WTC11 (cell line): ENCODE measurements at regions of chr1 and their contacts with region 1.

Region 1: GRCh38 chr1:248811514-248812490 is 13.9 kb downstream of the SH3BP5L start:
- DNase-seq: peak; percentile 36
- ATAC-seq: peak; percentile 90
- H3K4me3 Mint-ChIP-seq: no peak overlapping the region
- H3K27ac Mint-ChIP-seq: no peak overlapping the region
- H3K4me1 Mint-ChIP-seq: peaks cover 14% of the 10 kb centered on the region
- H3K27me3 Mint-ChIP-seq: no peaks in the 10 kb centered on the region
- CTCF ChIP-seq: no peak

Region 2: DNA sequence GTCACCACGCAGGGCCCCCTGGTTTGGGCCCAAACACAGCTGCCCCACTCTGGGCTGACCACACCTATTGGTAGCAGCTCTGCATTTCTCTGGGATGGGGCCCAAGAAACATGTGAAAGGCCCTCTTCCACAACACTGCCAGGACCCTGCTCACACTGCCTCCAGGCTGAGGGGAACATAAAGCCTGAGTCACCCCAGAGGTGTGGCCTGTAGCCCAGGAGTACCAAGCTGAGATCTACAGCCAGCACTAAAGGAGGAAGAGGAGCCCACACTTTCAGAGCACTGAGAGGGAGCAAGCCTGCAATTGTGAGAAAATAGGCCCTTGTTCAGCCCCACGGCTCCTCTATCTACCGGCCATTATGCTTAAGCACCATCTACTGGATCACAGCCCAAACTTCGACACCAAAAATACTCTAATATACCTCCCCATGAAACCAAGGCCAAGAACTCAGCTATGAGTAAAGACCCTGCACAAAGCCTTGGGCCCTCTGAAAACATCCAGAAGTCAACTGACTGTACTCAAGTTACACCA is 199.9 kb before region 1 on chr1:
- CTCF ChIA-PET with region 1: no interaction called
- POLR2A ChIA-PET with region 1: no interaction called
- DNase-seq: no peak
- ATAC-seq: no peak
- H3K4me3 Mint-ChIP-seq: no peak overlapping the region
- H3K27ac Mint-ChIP-seq: no peak overlapping the region
- H3K4me1 Mint-ChIP-seq: no peaks in the 10 kb centered on the region
- H3K27me3 Mint-ChIP-seq: peaks cover 4% of the 10 kb centered on the region; the same call in 1 of the 2 replicates
- CTCF ChIP-seq: no peak

Region 3: DNA sequence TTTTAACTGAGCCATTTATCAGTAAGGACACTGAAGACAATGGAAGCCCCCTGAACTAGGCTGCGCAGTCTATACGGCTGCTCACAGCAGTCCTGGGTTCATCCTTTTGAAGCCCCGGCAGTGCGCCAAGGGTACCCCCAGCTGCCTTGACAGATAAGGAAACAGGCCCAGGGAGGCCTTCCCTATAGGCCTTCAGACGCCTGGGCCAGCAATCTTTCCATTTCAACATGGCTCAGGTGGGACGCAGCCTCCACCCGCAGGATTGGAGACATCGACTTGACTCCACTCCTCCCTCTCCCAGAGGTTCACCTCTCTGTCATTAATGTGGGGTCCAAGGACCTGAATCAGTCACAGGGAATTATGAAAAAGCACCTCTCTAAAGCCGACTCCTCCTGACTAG is 53.5 kb before region 1 on chr1:
- CTCF ChIA-PET with region 1: no interaction called
- POLR2A ChIA-PET with region 1: no interaction called
- DNase-seq: no peak
- ATAC-seq: no peak
- H3K4me3 Mint-ChIP-seq: no peak overlapping the region
- H3K27ac Mint-ChIP-seq: no peak overlapping the region
- H3K4me1 Mint-ChIP-seq: no peaks in the 10 kb centered on the region
- H3K27me3 Mint-ChIP-seq: no peaks in the 10 kb centered on the region; the same call in 1 of the 2 replicates
- CTCF ChIP-seq: no peak

Region 4: GRCh38 chr1:248798791-248799190 is 13.0 kb before region 1 on chr1:
- CTCF ChIA-PET with region 1: no interaction called
- POLR2A ChIA-PET with region 1: no interaction called
- DNase-seq: no peak
- ATAC-seq: no peak
- H3K4me3 Mint-ChIP-seq: no peak overlapping the region
- H3K27ac Mint-ChIP-seq: no peak overlapping the region
- H3K4me1 Mint-ChIP-seq: no peaks in the 10 kb centered on the region
- H3K27me3 Mint-ChIP-seq: peaks cover 15% of the 10 kb centered on the region
- CTCF ChIP-seq: no peak

Region 5: DNA sequence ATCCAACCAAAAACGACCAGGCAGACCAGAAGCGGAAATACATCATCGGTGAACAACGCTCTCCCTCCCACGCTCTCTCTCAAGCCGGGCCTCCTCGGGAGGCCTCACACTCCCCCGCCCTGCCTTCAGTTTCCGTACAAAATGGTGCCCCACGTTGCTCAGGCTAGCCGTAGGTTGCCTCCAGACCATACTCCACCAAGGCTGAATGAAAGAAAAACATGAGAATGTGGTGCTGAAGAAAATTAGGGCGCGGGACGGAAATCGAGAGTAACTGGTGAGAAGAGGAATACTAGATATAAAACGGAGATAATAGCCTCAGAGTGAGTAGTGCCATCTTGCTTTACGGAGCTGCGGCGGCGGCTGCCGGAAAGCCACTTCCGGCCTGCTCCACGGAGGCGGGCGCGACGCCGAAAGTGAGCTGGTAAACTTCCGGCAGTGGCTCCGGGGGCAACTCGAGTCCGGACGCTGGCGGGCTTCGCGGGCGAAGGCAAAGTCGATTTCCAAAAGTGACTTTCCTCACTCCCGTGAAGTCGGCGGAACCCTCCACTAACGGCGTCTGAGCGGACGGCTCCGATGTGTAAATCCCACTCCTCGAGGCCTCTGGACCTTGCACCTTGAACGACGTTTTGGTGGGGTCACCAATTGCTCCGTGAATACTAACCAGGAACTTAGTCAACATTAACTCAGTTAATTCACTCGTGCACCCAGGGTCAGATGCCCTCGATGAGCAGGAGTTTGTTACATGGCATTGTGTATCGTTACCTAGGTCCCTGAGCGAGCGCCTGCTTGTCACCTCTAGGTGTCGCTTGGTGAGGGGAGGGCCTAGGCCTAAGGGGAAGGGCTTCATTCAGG is 14.3 kb after region 1 on chr1 and contains the start of gene SH3BP5L:
- CTCF ChIA-PET with region 1: interaction called, 11 read pairs
- POLR2A ChIA-PET with region 1: no interaction called
- DNase-seq: peak; percentile 85
- ATAC-seq: peak; percentile 91
- H3K4me3 Mint-ChIP-seq: peak within 1 kb of the TSS; percentile 99
- H3K27ac Mint-ChIP-seq: peak within 1 kb of the TSS; percentile 100
- H3K4me1 Mint-ChIP-seq: peaks cover 16% of the 10 kb centered on the region
- H3K27me3 Mint-ChIP-seq: no peaks in the 10 kb centered on the region; the same call in 1 of the 2 replicates
- CTCF ChIP-seq: no peak; the same call in 1 of the 2 replicates
- total RNA-seq, gene SH3BP5L: 28.3 to 32.9 TPM (median 28.3 TPM) in 3 replicates